ENCODE measurements at regions of chr3 and their contacts with region 1.

Region 1: DNA sequence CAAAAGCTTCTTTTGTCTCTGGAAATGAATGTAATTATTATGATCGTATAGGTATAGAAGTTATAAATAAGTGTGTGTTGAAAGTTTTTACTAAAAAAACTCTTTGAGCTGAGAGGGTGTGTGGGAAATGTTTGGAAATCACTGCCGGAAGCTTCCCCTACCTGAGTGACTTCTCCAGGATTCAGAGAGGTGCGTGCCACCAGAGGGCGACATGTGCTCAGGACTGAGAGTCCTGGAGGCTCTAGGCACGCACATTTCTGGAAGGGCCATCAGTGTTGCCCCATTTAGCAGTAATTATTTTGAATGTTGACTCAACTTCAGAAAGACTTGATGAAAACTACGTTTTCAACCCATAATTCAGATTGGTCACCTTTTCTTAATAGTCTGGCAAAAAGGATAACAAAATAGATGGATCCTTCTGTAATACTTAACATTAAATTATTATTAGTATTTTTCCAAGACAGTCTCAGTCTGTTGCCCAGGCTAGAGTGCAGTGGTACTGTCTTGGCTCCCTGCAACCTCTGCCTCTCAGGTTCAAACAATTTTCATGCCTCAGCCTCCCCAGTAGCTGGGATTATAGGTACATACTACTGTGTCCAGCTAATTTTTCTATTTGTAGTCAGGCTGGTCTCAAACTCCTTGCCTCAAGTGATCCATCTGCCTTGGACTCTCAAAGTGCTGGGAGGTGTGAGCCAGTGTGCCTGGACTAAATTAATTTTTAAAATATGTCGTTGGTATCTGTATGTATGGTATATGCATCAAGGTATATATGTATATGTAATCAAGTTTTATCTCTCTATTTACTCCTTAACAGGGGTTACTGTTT is 34.5 kb downstream of the GPR171 start:
- DNase-seq: peak; percentile 86 to 89 (median 88)
- ATAC-seq: peak; percentile 94 to 97 (median 94)
- H3K4me3 ChIP-seq: no peak overlapping the region
- H3K27ac ChIP-seq: no peak overlapping the region
- H3K4me1 ChIP-seq: peaks cover 0 to 7% (median 0%) of the 10 kb centered on the region in 4 donors
- H3K27me3 ChIP-seq: no peaks in the 10 kb centered on the region
- CTCF ChIP-seq: peak; percentile 86 to 88 (median 87)
- POLR2A ChIP-seq: no peak

Region 2: DNA sequence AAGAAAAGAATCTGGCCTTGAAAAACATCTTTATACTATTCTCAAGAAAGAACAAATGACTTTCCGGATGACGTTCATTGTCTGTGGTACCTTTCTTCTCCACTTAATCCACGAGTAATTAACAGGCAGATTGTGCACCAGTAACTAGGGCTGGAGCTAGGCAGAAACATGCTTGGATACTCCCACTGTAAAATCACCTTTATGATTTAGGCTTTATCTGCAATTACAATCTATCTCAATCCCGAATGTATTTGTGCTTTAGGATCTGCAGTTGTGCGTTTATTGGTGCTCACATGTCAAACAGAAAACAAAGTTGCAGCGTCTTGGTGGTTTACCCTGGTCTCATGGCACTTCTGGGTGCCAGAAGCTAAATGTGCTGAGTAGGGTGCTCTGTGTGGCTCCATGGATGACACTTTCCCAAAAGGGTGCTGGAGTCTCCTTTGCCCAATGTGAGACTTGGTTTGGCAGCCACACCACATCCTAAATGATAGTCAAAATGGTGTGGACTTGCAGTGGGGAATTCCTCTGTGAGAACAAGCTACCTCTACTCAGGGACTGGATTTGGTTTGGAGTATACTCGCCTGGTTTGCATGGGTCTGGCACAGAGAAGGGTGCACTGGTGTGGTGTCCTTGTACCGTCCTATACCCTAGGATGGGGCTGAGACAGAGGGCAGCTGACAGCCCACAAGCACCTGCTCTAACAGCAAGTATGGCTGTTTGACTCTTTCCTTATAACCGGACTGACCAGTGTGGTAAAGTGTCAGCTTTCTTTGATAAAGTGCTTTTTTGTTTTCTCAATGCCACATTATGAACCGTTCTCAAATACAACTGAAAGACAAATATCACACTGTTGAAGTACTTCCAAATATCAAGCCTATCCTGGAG is 629.9 kb before region 1 on chr3:
- intact Hi-C with region 1: no loop called
- DNase-seq: no peak
- ATAC-seq: peak; percentile 38 to 59 (median 45)
- H3K4me3 ChIP-seq: no peak overlapping the region
- H3K27ac ChIP-seq: no peak overlapping the region
- H3K4me1 ChIP-seq: peaks cover 0 to 5% (median 0%) of the 10 kb centered on the region in 4 donors
- H3K27me3 ChIP-seq: no peaks in the 10 kb centered on the region
- CTCF ChIP-seq: no peak
- POLR2A ChIP-seq: no peak

Region 3: DNA sequence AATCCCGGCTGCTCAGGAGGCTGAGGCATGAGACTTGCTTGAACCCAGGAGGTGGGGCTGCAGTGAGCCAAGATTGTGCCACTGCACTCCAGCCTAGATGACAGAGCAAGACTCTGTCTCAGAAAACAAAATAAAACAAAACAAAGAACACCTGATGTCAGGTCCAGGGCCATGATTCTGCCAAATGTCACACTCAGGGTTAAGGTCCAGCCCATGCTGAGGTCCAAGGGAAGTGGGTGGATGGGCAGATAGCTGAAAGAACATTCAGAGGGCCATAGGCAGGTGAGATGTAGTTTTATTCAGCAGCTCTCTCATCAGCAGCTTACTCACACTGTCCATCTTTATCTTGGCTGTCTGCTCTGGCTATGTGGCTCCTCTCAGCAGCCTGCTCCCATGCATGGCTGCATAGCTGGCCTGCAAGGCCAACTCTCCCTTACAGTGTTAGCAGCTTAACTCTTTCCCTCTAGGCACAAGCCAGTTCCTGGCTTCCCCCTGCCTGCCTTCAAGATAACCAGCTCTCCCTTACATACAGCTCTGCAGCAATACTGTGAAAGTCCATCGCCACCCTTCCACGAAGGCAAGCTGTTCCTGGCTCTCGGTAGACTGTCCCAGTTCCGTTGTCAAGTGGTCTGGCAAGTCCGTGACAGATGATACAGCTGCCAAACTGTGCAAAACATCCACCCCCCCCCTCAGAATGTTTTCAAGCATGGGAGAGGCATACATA is 343.1 kb before region 1 on chr3:
- intact Hi-C with region 1: no loop called
- DNase-seq: no peak
- ATAC-seq: peak; percentile 29 to 72 (median 56)
- H3K4me3 ChIP-seq: no peak overlapping the region
- H3K27ac ChIP-seq: no peak overlapping the region
- H3K4me1 ChIP-seq: no peaks in the 10 kb centered on the region
- H3K27me3 ChIP-seq: no peaks in the 10 kb centered on the region
- CTCF ChIP-seq: no peak
- POLR2A ChIP-seq: no peak

Region 4: DNA sequence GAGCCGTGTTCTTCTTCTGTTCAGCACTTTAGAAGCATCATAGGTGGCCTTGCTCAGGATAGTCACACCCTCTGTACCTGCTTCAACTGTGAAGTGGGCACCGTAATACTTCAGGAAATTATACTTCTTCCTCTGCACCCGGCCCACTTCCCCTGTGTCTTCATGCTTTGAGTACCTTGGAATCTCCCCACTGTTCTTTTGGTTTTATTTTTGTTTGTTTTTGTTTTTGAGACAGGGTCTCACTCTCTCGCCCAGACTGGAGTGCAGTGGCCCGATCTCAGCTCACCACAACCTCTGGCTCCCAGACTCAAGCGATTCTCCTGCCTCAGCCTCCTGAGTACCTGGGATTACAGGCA is 108.2 kb after region 1 on chr3:
- intact Hi-C with region 1: loop called (anchors 5 to 10 kb)
- DNase-seq: no peak
- ATAC-seq: peak in 1 of 4 donors; percentile 33
- H3K4me3 ChIP-seq: no peak overlapping the region
- H3K27ac ChIP-seq: no peak overlapping the region
- H3K4me1 ChIP-seq: no peaks in the 10 kb centered on the region
- H3K27me3 ChIP-seq: no peaks in the 10 kb centered on the region
- CTCF ChIP-seq: no peak
- POLR2A ChIP-seq: no peak

Region 5: GRCh38 chr3:151282921-151283320 is 114.4 kb after region 1 on chr3:
- intact Hi-C with region 1: loop called (anchors 5 to 10 kb)
- DNase-seq: no peak
- ATAC-seq: peak; percentile 74 to 88 (median 84)
- H3K4me3 ChIP-seq: no peak overlapping the region
- H3K27ac ChIP-seq: no peak overlapping the region
- H3K4me1 ChIP-seq: no peaks in the 10 kb centered on the region
- H3K27me3 ChIP-seq: no peaks in the 10 kb centered on the region
- CTCF ChIP-seq: peak; percentile 58 to 86 (median 66)
- POLR2A ChIP-seq: no peak

Region 6: GRCh38 chr3:151316267-151316991 is 147.9 kb after region 1 on chr3 and contains the start of gene GPR87:
- intact Hi-C with region 1: no loop called
- DNase-seq: no peak
- ATAC-seq: no peak
- H3K4me3 ChIP-seq: no peak within 1 kb of the TSS
- H3K27ac ChIP-seq: no peak within 1 kb of the TSS
- H3K4me1 ChIP-seq: no peaks in the 10 kb centered on the region
- H3K27me3 ChIP-seq: no peaks in the 10 kb centered on the region
- CTCF ChIP-seq: no peak
- POLR2A ChIP-seq: no peak
- total RNA-seq, gene GPR87: not detected

Region 7: GRCh38 chr3:151379083-151379734 is 210.7 kb after region 1 on chr3:
- intact Hi-C with region 1: no loop called
- DNase-seq: no peak
- ATAC-seq: peak in 3 of 4 donors; percentile 46 to 56 (median 53)
- H3K4me3 ChIP-seq: no peak overlapping the region
- H3K27ac ChIP-seq: no peak overlapping the region
- H3K4me1 ChIP-seq: no peaks in the 10 kb centered on the region
- H3K27me3 ChIP-seq: no peaks in the 10 kb centered on the region
- CTCF ChIP-seq: peak in 3 of 4 donors; percentile 22 to 33 (median 26)
- POLR2A ChIP-seq: no peak

Measured in right lobe of liver (tissue), 6 donors.